Sciatic nerve (tissue), 2 donors: ENCODE measurements at regions of chr1 and their contacts with region 1.

Region 1: GRCh38 chr1:71166178-71167173 is 85.6 kb upstream of the ZRANB2 start:
- DNase-seq: no peak
- ATAC-seq: no peak

Region 2: DNA sequence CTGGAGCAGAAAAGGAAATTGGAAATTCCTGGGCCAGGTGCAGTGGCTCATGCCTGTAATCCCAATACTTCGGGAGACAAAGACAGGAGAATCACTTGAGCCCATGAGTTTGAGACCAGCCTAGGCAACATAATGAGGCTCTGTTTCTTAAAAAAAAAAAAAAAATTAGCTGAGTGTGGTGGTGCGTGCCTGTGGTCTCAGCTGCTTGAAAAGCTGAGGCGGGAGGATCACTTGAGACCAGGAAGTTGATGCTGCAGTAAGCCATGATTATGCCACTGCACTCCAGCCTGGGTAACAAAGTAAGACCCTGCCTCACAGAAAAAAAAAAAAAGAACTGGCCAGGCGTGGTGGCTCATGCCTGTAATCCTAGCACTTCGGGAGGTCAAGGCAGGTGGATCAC is 888.6 kb before region 1 on chr1:
- intact Hi-C with region 1: loop called (anchors 5 kb)
- DNase-seq: no peak
- ATAC-seq: no peak

Region 3: GRCh38 chr1:71093938-71094337 is 72.5 kb before region 1 on chr1:
- intact Hi-C with region 1: no loop called
- DNase-seq: no peak
- ATAC-seq: no peak

Region 4: GRCh38 chr1:71428029-71428428 is 261.6 kb after region 1 on chr1:
- intact Hi-C with region 1: no loop called
- DNase-seq: no peak
- ATAC-seq: no peak